ENCODE measurements at regions of chr6 and their contacts with region 1.

Region 1: GRCh38 chr6:149028767-149029405 is 282.1 kb downstream of the UST start:
- H3K4me3 Mint-ChIP-seq: no peak overlapping the region
- H3K27ac Mint-ChIP-seq: no peak overlapping the region
- H3K4me1 Mint-ChIP-seq: peaks cover 19% of the 10 kb centered on the region
- H3K27me3 Mint-ChIP-seq: no peaks in the 10 kb centered on the region

Region 2: DNA sequence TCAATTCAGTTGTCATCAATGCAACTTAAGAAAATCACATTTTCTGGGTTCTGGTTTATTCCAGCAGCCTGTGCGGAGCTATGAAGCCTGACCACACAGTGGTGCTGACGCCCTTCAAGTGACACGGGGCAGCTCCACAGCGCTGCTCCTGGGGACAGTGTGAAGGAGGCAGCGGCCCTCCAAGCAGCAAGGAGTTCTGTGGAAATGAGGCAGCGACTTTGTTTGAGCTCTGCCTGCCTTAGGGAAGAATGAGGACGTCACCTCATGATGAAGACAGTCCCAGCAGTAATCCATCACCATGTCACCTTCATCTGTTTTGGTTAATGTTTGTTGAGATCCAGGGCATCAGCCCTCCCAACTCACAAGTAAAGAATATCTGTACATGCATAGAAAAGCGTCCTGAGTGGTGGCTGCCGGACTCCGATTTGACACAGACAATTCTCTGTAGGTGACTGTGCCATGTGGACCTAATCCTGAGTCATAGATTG is 450.6 kb before region 1 on chr6:
- intact Hi-C with region 1: loop called (anchors 10 kb)
- H3K4me3 Mint-ChIP-seq: no peak overlapping the region
- H3K27ac Mint-ChIP-seq: no peak overlapping the region
- H3K4me1 Mint-ChIP-seq: peaks cover 26% of the 10 kb centered on the region
- H3K27me3 Mint-ChIP-seq: peaks cover 28% of the 10 kb centered on the region

Region 3: DNA sequence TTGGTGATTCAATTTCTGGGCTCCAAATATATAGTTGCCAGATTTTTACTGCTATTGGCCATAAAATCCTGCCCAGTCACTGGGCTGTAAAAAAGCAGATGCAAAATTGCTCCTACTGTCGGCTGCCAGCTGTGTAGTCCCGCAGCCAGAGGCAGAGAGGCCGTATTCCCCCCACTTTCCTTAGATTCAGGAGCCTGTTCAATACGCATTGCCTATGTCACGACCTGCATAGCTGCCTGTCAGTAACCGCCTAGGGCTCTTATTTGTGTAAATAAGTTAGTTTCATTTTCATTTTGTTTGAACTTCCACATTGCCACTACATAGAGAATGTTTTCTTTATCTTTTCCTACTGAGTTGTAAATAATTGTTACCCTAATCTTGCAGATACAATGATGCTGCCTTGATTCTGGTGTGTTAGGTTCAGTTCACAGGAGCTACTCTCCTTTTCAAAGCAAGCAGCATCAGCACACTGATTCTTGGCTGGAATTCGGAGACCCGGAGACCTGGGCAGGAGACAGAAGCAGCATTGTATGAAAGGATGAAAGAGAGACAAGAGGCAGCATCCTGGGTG is 328.1 kb before region 1 on chr6:
- intact Hi-C with region 1: no loop called
- H3K4me3 Mint-ChIP-seq: peak overlapping the region; percentile 63
- H3K27ac Mint-ChIP-seq: peak overlapping the region; percentile 65
- H3K4me1 Mint-ChIP-seq: peaks cover 12% of the 10 kb centered on the region
- H3K27me3 Mint-ChIP-seq: no peaks in the 10 kb centered on the region

Region 4: GRCh38 chr6:148972481-148972880 is 56.4 kb before region 1 on chr6:
- intact Hi-C with region 1: no loop called
- H3K4me3 Mint-ChIP-seq: no peak overlapping the region
- H3K27ac Mint-ChIP-seq: no peak overlapping the region
- H3K4me1 Mint-ChIP-seq: peaks cover 10% of the 10 kb centered on the region
- H3K27me3 Mint-ChIP-seq: peaks cover 25% of the 10 kb centered on the region

Region 5: GRCh38 chr6:149271348-149272340 is 242.8 kb after region 1 on chr6:
- intact Hi-C with region 1: no loop called
- H3K4me3 Mint-ChIP-seq: peak overlapping the region; percentile 50
- H3K27ac Mint-ChIP-seq: peak overlapping the region; percentile 84
- H3K4me1 Mint-ChIP-seq: peaks cover 74% of the 10 kb centered on the region
- H3K27me3 Mint-ChIP-seq: no peaks in the 10 kb centered on the region

Region 6: GRCh38 chr6:149431905-149432775 is 403.3 kb after region 1 on chr6:
- intact Hi-C with region 1: loop called (anchors 1 kb)
- H3K4me3 Mint-ChIP-seq: no peak overlapping the region
- H3K27ac Mint-ChIP-seq: no peak overlapping the region
- H3K4me1 Mint-ChIP-seq: peaks cover 15% of the 10 kb centered on the region
- H3K27me3 Mint-ChIP-seq: no peaks in the 10 kb centered on the region